ENCODE measurements at regions of chr7 and their contacts with region 1.

Region 1: DNA sequence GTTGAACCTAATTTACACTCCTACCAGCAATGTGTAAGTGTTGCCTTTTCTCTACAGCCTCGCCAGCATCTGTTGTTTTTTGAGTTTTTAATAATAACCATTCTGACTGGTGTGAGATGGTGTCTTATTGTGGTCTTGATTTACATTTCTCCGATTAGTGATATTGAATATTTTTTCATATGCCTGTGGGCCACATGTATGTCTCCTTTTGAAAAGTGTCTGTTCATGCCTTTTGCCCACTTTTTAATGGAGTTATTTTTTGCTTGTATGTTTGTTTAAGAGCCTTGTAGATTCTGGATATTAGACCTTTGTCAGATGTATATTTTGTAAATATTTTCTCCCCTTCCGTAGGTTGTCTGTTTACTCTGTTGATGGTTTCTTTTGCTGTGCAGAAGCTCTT is 195.3 kb downstream of the DNAJB6 start:
- DNase-seq: no peak
- ATAC-seq: no peak
- H3K4me3 ChIP-seq: no peak overlapping the region
- H3K27ac ChIP-seq: no peak overlapping the region
- H3K4me1 ChIP-seq: no peaks in the 10 kb centered on the region
- H3K27me3 ChIP-seq: no peaks in the 10 kb centered on the region
- CTCF ChIP-seq: no peak

Region 2: DNA sequence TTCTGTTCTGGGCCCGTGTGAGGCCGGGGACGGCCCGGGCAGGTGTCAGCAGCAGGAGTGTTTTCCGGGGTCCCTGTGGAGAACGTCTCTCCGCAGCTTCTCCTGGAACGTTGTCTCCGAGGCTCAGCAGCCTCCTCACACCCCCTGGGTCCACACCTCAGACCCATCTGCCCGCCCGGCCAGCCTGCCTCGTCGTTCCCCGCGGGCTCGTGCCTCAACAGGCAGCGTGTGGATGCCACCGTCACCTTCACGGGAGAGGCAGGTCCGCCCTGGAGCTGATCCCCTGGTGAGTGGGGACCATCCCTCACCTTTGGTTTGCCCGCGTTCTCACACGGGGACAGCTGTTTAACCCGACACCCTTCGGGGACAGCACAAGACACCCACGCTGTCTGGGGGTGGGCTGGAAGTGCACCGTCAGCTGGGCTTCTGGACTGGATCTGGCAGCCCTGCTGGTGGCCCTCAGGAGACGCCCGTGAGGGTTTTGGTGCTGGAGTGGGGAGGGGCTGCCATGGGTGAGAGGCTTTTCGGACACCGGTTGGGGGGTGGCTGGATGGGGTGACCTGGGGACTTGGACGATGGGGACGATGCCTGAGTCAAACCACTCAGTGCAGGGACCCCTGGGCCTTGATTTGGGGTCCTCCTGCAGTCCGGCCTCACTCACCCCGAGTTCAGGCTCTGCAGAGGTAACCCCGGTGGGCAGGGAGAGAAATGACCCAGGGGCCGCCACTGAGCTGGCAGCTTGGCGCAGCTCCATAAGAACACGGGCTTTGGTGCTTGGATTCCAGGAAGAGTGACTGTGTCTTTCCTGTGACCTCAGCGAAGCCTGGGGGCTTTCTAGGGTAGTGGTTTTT is 63.6 kb before region 1 on chr7:
- intact Hi-C with region 1: loop called in 1 of 3 experiments (anchors 2 kb)
- DNase-seq: peak in 1 of 6 donors; percentile 45
- ATAC-seq: no peak
- H3K4me3 ChIP-seq: no peak overlapping the region
- H3K27ac ChIP-seq: no peak overlapping the region
- H3K4me1 ChIP-seq: no peaks in the 10 kb centered on the region
- H3K27me3 ChIP-seq: peaks cover 0 to 5% (median 0%) of the 10 kb centered on the region in 4 donors
- CTCF ChIP-seq: no peak

Region 3: GRCh38 chr7:158274996-158275395 is 742.9 kb after region 1 on chr7:
- intact Hi-C with region 1: no loop called
- DNase-seq: peak in 2 of 6 donors; percentile 38 to 52
- ATAC-seq: no peak
- H3K4me3 ChIP-seq: no peak overlapping the region
- H3K27ac ChIP-seq: no peak overlapping the region
- H3K4me1 ChIP-seq: no peaks in the 10 kb centered on the region
- H3K27me3 ChIP-seq: no peaks in the 10 kb centered on the region
- CTCF ChIP-seq: no peak